WTC11 (cell line): ENCODE measurements at regions of chr7 and their contacts with region 1.

Region 1: GRCh38 chr7:30074422-30075030 is 46.3 kb downstream of the PLEKHA8 start:
- DNase-seq: no peak
- ATAC-seq: peak; percentile 36; the same call in 1 of the 2 replicates
- H3K4me3 Mint-ChIP-seq: no peak overlapping the region
- H3K27ac Mint-ChIP-seq: no peak overlapping the region
- H3K4me1 Mint-ChIP-seq: peaks cover 7% of the 10 kb centered on the region
- H3K27me3 Mint-ChIP-seq: no peaks in the 10 kb centered on the region
- CTCF ChIP-seq: no peak

Region 2: DNA sequence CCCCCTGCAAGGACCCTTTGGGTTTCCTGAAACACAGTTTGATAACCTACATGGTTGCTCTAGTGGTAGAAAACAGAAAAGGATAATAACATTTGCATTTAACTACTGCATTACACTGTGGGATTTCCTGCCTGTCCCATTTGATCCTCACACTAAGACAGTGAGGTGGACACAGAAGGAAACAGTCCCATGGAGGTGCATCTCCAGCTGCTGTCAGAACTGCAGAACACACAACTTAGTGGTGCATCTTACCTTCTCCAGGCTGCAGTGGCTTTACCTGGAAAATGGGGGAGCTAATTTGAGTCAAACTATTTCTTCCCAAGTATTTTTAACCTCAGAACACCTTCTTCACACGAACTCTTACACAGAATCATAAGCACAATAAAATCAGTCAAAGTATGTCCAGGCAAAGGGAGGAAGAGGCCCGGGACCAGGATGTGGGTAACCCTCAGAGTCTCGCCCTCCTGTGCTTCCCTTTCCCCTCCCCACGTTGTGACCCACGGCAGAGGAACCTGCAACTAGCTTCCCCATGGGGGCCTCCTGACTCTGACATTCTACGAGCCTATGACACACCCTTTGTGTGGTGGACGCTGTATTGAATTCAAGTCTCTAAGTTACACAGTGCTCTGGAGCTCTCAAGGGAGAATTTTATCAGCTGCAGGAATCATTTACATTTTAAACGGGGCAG is 118.6 kb before region 1 on chr7:
- CTCF ChIA-PET with region 1: interaction called, 10 read pairs
- POLR2A ChIA-PET with region 1: no interaction called
- DNase-seq: no peak
- ATAC-seq: no peak
- H3K4me3 Mint-ChIP-seq: no peak overlapping the region
- H3K27ac Mint-ChIP-seq: peak overlapping the region; percentile 51
- H3K4me1 Mint-ChIP-seq: peaks cover 36% of the 10 kb centered on the region
- H3K27me3 Mint-ChIP-seq: no peaks in the 10 kb centered on the region
- CTCF ChIP-seq: no peak

Region 3: DNA sequence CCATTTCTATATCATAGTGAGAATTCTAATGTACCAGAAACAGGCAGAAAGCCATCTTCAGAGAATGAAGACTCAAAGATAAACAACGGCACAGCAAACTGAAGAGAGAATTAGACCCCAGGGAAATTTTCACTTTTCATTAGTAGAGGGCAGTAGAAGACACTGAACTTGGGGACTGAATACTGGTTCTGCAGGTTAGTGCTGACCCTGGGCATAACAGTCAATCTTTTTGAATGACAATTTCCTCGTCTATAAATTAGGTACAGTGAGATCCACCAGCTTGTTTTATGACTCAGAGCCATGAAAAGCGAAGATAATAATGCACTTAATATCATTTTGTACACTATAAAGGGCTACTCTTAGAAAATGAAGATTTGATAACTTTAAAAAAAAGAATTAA is 61.8 kb before region 1 on chr7:
- CTCF ChIA-PET with region 1: no interaction called
- POLR2A ChIA-PET with region 1: no interaction called
- DNase-seq: no peak
- ATAC-seq: no peak
- H3K4me3 Mint-ChIP-seq: no peak overlapping the region
- H3K27ac Mint-ChIP-seq: no peak overlapping the region
- H3K4me1 Mint-ChIP-seq: no peaks in the 10 kb centered on the region
- H3K27me3 Mint-ChIP-seq: no peaks in the 10 kb centered on the region
- CTCF ChIP-seq: no peak

Region 4: DNA sequence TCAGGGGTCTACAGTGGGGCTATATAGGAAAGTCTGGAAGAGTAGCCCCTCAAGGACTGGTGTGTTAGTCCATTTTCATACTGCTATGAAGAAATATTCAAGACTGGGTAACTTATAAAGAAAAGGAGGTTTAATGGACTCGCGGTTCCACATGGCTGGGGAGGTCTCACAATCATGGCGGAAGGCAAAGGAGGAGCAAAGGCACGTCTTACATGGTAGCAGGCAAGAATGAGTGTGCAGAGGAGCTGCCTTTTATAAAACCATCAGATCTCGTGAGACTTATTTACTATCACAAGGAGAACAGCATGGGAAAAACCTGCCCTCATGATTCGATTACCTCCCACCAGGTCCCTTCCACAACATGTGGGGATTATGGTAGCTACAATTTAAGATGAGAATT is 51.0 kb before region 1 on chr7:
- CTCF ChIA-PET with region 1: no interaction called
- POLR2A ChIA-PET with region 1: no interaction called
- DNase-seq: no peak
- ATAC-seq: no peak
- H3K4me3 Mint-ChIP-seq: peak overlapping the region; percentile 40
- H3K27ac Mint-ChIP-seq: no peak overlapping the region
- H3K4me1 Mint-ChIP-seq: peaks cover 30% of the 10 kb centered on the region
- H3K27me3 Mint-ChIP-seq: no peaks in the 10 kb centered on the region
- CTCF ChIP-seq: no peak

Region 5: DNA sequence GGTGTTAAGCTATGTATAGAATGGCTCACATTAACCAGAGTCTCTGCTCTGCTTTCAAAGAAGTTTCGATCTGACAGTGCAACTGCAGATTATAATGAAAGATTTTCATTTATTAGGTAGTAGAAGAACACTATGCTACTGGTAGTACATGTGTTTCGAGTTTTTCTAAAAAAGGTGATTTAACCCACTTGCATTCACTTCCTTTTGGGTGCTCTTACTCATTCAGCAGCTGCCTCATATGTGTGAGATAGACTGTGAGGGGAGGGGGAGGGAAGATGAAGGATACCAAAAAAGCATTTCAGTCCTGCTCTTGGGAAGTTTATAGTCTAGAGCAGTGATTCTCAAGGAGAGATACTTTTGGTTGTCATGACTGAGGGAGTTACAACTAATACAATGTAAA is 25.9 kb before region 1 on chr7:
- CTCF ChIA-PET with region 1: no interaction called
- POLR2A ChIA-PET with region 1: no interaction called
- DNase-seq: no peak
- ATAC-seq: no peak
- H3K4me3 Mint-ChIP-seq: no peak overlapping the region
- H3K27ac Mint-ChIP-seq: no peak overlapping the region
- H3K4me1 Mint-ChIP-seq: peaks cover 8% of the 10 kb centered on the region; the same call in 1 of the 2 replicates
- H3K27me3 Mint-ChIP-seq: no peaks in the 10 kb centered on the region
- CTCF ChIP-seq: no peak

Region 6: DNA sequence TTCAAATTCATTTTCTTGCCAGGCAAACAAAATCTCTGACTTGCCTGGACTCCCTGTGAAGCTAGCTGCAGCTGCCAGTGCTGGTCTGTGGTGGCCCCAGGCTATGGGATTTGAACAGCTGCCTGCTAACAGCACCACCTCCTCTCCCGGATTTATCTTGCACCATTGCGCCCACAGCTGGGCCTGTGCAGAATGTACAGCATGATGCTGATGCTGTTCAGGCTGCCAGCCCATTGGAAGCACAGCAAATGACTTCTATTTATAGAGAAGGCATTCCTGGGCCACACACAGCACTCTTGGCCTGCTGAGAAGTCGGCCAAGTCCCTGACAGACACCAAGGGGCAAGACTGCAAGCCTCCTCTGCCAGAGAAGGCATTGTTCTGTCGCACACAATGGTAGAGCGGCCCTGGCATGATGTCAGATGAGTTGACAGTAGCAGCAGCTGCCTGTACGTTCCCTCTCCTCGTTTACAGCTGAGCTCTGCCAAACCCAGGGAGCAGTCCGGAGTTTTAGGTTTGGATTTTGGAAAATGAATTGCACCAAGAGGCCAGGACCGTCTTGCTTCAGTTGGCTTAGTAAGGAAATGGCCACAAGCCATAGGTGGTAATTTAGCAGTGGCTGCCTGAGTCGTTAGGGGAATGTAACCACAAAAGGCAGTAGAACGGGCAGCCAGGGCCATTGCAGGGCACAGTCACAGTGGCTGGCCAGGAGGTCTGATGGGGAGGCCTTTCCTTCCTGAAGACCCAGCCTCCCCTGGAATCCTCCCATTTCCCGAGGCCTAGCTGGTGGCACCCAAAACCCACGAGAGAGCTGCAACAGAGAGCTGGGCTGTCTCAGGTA is 98.8 kb after region 1 on chr7:
- CTCF ChIA-PET with region 1: no interaction called
- POLR2A ChIA-PET with region 1: no interaction called
- DNase-seq: peak; percentile 36
- ATAC-seq: peak; percentile 52
- H3K4me3 Mint-ChIP-seq: no peak overlapping the region
- H3K27ac Mint-ChIP-seq: no peak overlapping the region
- H3K4me1 Mint-ChIP-seq: peaks cover 24% of the 10 kb centered on the region
- H3K27me3 Mint-ChIP-seq: peaks cover 5% of the 10 kb centered on the region
- CTCF ChIP-seq: no peak